Gastrocnemius medialis (tissue), 4 donors: ENCODE measurements at regions of chr12 and their contacts with region 1.

Region 1: GRCh38 chr12:95262808-95263207 is 45.2 kb downstream of the VEZT start:
- DNase-seq: no peak
- ATAC-seq: peak in 1 of 2 donors; percentile 27
- H3K4me3 ChIP-seq: no peak overlapping the region
- H3K27ac ChIP-seq: no peak overlapping the region
- H3K4me1 ChIP-seq: peaks cover 12 to 29% of the 10 kb centered on the region in 2 donors
- H3K27me3 ChIP-seq: no peaks in the 10 kb centered on the region
- CTCF ChIP-seq: no peak
- POLR2A ChIP-seq: no peak

Region 2: GRCh38 chr12:95224202-95225170 is 38.3 kb before region 1 on chr12:
- in situ Hi-C with region 1: no loop called
- intact Hi-C with region 1: loop called (anchors 5 kb)
- DNase-seq: no peak
- ATAC-seq: no peak
- H3K4me3 ChIP-seq: no peak overlapping the region
- H3K27ac ChIP-seq: peak overlapping the region in 3 of 4 donors; percentile 16 to 20 (median 18)
- H3K4me1 ChIP-seq: peaks cover 64% of the 10 kb centered on the region in 2 donors
- H3K27me3 ChIP-seq: no peaks in the 10 kb centered on the region
- CTCF ChIP-seq: no peak
- POLR2A ChIP-seq: no peak

Region 3: GRCh38 chr12:95440401-95440800 is 177.6 kb after region 1 on chr12:
- in situ Hi-C with region 1: no loop called
- intact Hi-C with region 1: no loop called
- DNase-seq: no peak
- ATAC-seq: no peak
- H3K4me3 ChIP-seq: no peak overlapping the region
- H3K27ac ChIP-seq: no peak overlapping the region
- H3K4me1 ChIP-seq: no peaks in the 10 kb centered on the region
- H3K27me3 ChIP-seq: no peaks in the 10 kb centered on the region
- CTCF ChIP-seq: no peak
- POLR2A ChIP-seq: no peak